Gastrocnemius medialis (tissue), 4 donors: ENCODE measurements at regions of chr16 and their contacts with region 1.

Region 1: GRCh38 chr16:24367186-24367710 is 111.1 kb downstream of the CACNG3 start:
- DNase-seq: no peak
- ATAC-seq: no peak
- H3K4me3 ChIP-seq: no peak overlapping the region
- H3K27ac ChIP-seq: no peak overlapping the region
- H3K4me1 ChIP-seq: no peaks in the 10 kb centered on the region
- H3K27me3 ChIP-seq: no peaks in the 10 kb centered on the region
- CTCF ChIP-seq: no peak
- POLR2A ChIP-seq: no peak

Region 2: DNA sequence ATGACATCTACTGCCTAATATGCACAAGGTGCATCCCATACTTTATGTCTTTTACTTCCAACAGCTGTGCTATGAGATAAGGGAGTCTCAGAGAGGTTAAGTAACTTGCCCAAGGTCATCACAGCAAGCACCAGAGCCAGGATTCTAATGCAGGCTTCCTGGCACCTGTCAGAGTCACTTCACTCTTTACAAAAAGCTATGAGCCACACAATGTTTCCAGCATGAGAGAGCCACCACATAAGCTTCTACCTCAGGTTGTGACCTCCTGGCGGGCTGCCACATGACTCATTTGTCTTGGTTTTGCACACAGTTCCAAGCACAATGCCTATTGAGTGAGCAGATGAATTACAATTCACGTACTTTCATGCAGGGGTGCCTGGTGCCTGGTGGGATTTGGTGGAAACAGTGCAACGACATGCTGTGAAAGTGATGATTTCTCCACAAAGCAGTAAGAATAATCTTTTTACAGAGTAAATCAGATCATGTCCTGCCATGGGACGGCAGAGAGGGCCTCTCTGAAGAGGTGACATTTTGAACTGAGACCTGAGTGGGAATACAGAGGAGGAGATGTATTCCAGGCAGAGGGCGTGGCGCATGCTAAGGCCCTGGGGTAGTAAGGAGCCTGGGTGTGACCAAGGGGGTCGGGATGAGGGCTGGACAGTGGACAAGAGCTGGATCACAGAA is 57.9 kb before region 1 on chr16:
- in situ Hi-C with region 1: loop called in 1 of 4 experiments (anchors 10 kb)
- intact Hi-C with region 1: no loop called
- DNase-seq: no peak
- ATAC-seq: no peak
- H3K4me3 ChIP-seq: no peak overlapping the region
- H3K27ac ChIP-seq: no peak overlapping the region
- H3K4me1 ChIP-seq: no peaks in the 10 kb centered on the region
- H3K27me3 ChIP-seq: no peaks in the 10 kb centered on the region
- CTCF ChIP-seq: no peak
- POLR2A ChIP-seq: no peak

Region 3: DNA sequence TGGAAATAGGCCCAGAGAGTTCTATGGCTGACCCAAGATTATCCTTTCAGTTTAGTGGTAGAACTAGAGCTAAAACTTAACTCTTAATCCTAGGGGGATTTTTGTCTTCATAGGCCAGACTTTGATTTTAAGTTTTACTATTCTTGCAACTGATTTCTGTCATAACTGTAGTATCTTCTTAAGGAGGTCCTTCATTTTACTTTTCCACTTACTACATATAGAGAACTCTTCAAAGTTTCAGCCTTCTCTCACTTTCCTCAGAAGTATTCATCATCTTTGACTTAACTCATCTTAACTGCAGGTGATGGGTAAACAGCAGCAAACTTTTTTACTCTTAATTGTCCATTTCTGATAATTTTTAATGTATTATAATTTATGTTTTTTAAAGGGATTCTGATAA is 195.6 kb after region 1 on chr16:
- in situ Hi-C with region 1: no loop called
- intact Hi-C with region 1: no loop called
- DNase-seq: no peak
- ATAC-seq: no peak
- H3K4me3 ChIP-seq: no peak overlapping the region
- H3K27ac ChIP-seq: no peak overlapping the region
- H3K4me1 ChIP-seq: no peaks in the 10 kb centered on the region
- H3K27me3 ChIP-seq: no peaks in the 10 kb centered on the region
- CTCF ChIP-seq: no peak
- POLR2A ChIP-seq: no peak